ENCODE measurements at regions of chr18 and their contacts with region 1.

Region 1: GRCh38 chr18:1663879-1664705 is 759.4 kb downstream of the ADCYAP1 start:
- DNase-seq: peak; percentile 41 to 91
- H3K4me3 ChIP-seq: no peak overlapping the region
- H3K27ac ChIP-seq: no peak overlapping the region
- H3K4me1 ChIP-seq: no peaks in the 10 kb centered on the region
- H3K27me3 ChIP-seq: no peaks in the 10 kb centered on the region
- CTCF ChIP-seq: peak; percentile 81 to 91 (median 83)
- EP300 ChIP-seq: no peak
- POLR2A ChIP-seq: no peak
- RAD21 ChIP-seq: peak; percentile 82 to 85

Region 2: GRCh38 chr18:1604751-1605150 is 59.3 kb before region 1 on chr18:
- CTCF ChIA-PET with region 1: interaction called, 10 read pairs
- POLR2A ChIA-PET with region 1: no interaction called
- DNase-seq: no peak
- H3K4me3 ChIP-seq: no peak overlapping the region
- H3K27ac ChIP-seq: no peak overlapping the region
- H3K4me1 ChIP-seq: no peaks in the 10 kb centered on the region
- H3K27me3 ChIP-seq: no peaks in the 10 kb centered on the region
- CTCF ChIP-seq: no peak
- EP300 ChIP-seq: no peak
- POLR2A ChIP-seq: no peak
- RAD21 ChIP-seq: no peak

Region 3: DNA sequence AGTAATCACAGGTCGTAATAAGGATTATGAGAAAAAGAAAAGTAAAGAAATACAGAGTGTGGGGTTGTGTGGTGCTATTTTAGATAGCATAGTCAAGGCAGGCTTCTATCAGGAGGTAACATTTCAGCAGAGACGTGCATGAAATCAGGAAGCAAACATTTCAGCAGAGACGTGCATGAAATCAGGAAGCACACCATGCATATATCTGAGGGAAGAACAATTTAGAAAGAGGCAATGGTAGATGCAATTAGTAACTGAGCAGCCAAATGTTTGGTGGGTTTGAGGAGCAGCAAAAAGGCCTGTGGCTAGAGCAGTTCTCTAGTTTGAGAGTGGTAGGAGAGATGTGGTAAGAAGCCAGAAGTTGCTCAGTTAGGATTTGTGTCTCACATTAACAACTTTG is 45.7 kb before region 1 on chr18:
- CTCF ChIA-PET with region 1: no interaction called
- POLR2A ChIA-PET with region 1: no interaction called
- DNase-seq: no peak
- H3K4me3 ChIP-seq: no peak overlapping the region
- H3K27ac ChIP-seq: no peak overlapping the region
- H3K4me1 ChIP-seq: no peaks in the 10 kb centered on the region
- H3K27me3 ChIP-seq: no peaks in the 10 kb centered on the region
- CTCF ChIP-seq: no peak
- EP300 ChIP-seq: no peak
- POLR2A ChIP-seq: no peak
- RAD21 ChIP-seq: no peak

Region 4: DNA sequence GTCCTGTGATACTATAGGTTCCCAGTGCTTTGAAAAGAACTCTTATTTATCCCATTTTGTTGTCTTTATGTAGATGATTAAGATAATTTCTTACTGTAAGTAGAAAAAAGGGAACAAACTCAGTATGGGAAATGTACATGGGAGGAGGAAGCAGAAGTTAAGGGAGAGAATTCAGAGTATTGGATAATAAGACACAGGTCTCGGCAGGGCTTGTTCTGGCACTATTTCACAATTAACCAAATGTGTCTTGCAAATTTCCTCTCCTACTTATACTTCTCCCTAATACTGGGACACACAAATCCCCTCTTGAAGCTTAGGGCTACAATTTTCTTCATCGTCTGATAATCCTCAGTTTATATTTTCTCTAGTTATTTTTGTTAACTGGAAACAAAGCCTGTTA is 15.4 kb before region 1 on chr18:
- CTCF ChIA-PET with region 1: interaction called, 12 read pairs
- POLR2A ChIA-PET with region 1: no interaction called
- DNase-seq: no peak
- H3K4me3 ChIP-seq: no peak overlapping the region
- H3K27ac ChIP-seq: no peak overlapping the region
- H3K4me1 ChIP-seq: no peaks in the 10 kb centered on the region
- H3K27me3 ChIP-seq: no peaks in the 10 kb centered on the region
- CTCF ChIP-seq: no peak
- EP300 ChIP-seq: no peak
- POLR2A ChIP-seq: no peak
- RAD21 ChIP-seq: no peak

Region 5: GRCh38 chr18:1676387-1676786 is 12.3 kb after region 1 on chr18:
- CTCF ChIA-PET with region 1: interaction called, 20 read pairs
- POLR2A ChIA-PET with region 1: no interaction called
- DNase-seq: no peak
- H3K4me3 ChIP-seq: no peak overlapping the region
- H3K27ac ChIP-seq: no peak overlapping the region
- H3K4me1 ChIP-seq: no peaks in the 10 kb centered on the region
- H3K27me3 ChIP-seq: no peaks in the 10 kb centered on the region
- CTCF ChIP-seq: no peak
- EP300 ChIP-seq: no peak
- POLR2A ChIP-seq: no peak
- RAD21 ChIP-seq: no peak